MCF 10A (cell line): ENCODE measurements at regions of chr1 and their contacts with region 1.

Region 1: DNA sequence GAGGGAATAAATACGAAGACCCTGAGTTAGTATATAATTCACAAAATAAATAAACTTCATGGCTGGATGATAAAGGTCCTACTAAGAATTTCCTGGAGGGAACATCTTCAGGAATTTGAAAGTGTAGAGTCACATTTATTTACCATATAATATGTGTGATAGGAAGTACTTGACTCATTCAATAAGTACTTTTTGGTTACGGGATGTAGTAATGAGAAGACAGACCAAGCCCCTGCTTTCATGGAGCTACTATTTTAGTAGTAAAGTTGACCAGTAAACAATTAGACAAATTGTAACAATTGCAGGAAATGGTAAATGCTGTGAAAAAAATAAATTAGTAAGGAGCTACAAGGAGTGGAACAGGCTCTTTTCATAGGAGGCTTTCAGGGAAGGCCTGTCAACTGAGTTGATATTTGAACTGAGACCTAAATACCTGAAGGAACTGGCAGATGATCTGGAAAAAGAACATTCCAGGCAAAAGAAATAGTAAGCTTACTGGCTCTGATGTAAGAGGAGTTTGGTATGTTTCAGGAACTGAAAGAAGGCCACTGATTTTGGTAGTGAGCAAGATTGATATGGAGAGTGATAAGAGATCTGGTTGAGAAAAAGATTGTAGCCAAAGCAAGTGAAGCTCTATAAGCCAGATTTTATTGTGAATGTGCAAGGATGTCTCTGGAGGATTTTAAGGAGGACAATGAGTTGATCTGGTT is 36.2 kb downstream of the CAMSAP2 start:
- DNase-seq: no peak
- H3K4me3 Mint-ChIP-seq: no peak overlapping the region
- H3K27ac Mint-ChIP-seq: peak overlapping the region; percentile 16
- H3K4me1 Mint-ChIP-seq: peaks cover 49% of the 10 kb centered on the region
- H3K27me3 Mint-ChIP-seq: no peaks in the 10 kb centered on the region
- CTCF ChIP-seq: no peak

Region 2: DNA sequence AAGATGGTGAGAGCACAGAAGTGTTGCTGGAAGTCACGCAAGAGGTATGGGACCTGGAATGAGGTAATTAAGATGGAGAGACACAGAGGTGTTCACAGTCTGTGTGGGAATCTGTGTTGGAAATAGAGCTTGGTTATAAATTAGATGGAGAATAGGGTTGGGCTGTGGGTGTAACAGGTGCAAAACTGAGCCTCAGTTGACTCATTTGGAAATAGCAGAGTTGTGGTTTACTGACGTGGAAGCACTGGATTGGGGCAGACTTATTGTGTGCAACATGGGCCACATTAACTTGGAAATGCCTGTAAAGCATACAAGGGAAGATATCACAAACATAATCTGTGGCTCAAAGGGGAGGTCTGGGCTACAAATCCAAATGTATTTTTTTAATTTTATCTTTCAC is 23.2 kb before region 1 on chr1:
- CTCF ChIA-PET with region 1: interaction called, 5 read pairs
- POLR2A ChIA-PET with region 1: interaction called, 16 read pairs
- intact Hi-C with region 1: no loop called
- DNase-seq: no peak
- H3K4me3 Mint-ChIP-seq: no peak overlapping the region
- H3K27ac Mint-ChIP-seq: no peak overlapping the region
- H3K4me1 Mint-ChIP-seq: peaks cover 52% of the 10 kb centered on the region
- H3K27me3 Mint-ChIP-seq: no peaks in the 10 kb centered on the region
- CTCF ChIP-seq: no peak

Region 3: GRCh38 chr1:200786788-200787187 is 11.9 kb after region 1 on chr1:
- CTCF ChIA-PET with region 1: interaction called, 5 read pairs
- POLR2A ChIA-PET with region 1: interaction called, 79 read pairs
- intact Hi-C with region 1: no loop called
- DNase-seq: no peak
- H3K4me3 Mint-ChIP-seq: no peak overlapping the region
- H3K27ac Mint-ChIP-seq: no peak overlapping the region
- H3K4me1 Mint-ChIP-seq: peaks cover 25% of the 10 kb centered on the region
- H3K27me3 Mint-ChIP-seq: no peaks in the 10 kb centered on the region
- CTCF ChIP-seq: no peak

Region 4: GRCh38 chr1:201156346-201156745 is 381.5 kb after region 1 on chr1:
- CTCF ChIA-PET with region 1: no interaction called
- POLR2A ChIA-PET with region 1: no interaction called
- intact Hi-C with region 1: no loop called
- DNase-seq: no peak
- H3K4me3 Mint-ChIP-seq: no peak overlapping the region
- H3K27ac Mint-ChIP-seq: no peak overlapping the region
- H3K4me1 Mint-ChIP-seq: peaks cover 5% of the 10 kb centered on the region
- H3K27me3 Mint-ChIP-seq: peaks cover 12% of the 10 kb centered on the region
- CTCF ChIP-seq: no peak